Activated T-helper 1 cell treated with anti-CD3 and anti-CD28 coated beads, Interleukin-12 subunit alpha, Interleukin-12 subunit beta, Interleukin-2, Interleukin-4 antibody, amounts not matched to agents 30 ng/mL and 10 ng/mL and 1 ng/mL, durations not matched to agents 14 hours and 24 hours and 36 hours (primary cell): ENCODE measurements at regions of chr6 and their contacts with region 1.

Region 1: GRCh38 chr6:35297601-35298481 is at the start of gene DEF6:
- DNase-seq: peak; percentile 85
- H3K4me3 Mint-ChIP-seq: peak within 1 kb of the TSS; percentile 88
- H3K27ac Mint-ChIP-seq: peak within 1 kb of the TSS; percentile 98
- H3K4me1 Mint-ChIP-seq: peaks cover 48% of the 10 kb centered on the region
- H3K27me3 Mint-ChIP-seq: no peaks in the 10 kb centered on the region
- total RNA-seq, gene DEF6: 123 and 125 TPM in 2 replicates

Region 2: GRCh38 chr6:35259194-35259947 is 38.5 kb before region 1 on chr6 and contains the start of gene ZNF76:
- intact Hi-C with region 1: loop called (anchors 2 kb)
- DNase-seq: peak; percentile 87
- H3K4me3 Mint-ChIP-seq: peak within 1 kb of the TSS; percentile 96
- H3K27ac Mint-ChIP-seq: peak within 1 kb of the TSS; percentile 88
- H3K4me1 Mint-ChIP-seq: peaks cover 40% of the 10 kb centered on the region
- H3K27me3 Mint-ChIP-seq: no peaks in the 10 kb centered on the region
- total RNA-seq, gene ZNF76: 32.8 and 33.1 TPM in 2 replicates

Region 3: DNA sequence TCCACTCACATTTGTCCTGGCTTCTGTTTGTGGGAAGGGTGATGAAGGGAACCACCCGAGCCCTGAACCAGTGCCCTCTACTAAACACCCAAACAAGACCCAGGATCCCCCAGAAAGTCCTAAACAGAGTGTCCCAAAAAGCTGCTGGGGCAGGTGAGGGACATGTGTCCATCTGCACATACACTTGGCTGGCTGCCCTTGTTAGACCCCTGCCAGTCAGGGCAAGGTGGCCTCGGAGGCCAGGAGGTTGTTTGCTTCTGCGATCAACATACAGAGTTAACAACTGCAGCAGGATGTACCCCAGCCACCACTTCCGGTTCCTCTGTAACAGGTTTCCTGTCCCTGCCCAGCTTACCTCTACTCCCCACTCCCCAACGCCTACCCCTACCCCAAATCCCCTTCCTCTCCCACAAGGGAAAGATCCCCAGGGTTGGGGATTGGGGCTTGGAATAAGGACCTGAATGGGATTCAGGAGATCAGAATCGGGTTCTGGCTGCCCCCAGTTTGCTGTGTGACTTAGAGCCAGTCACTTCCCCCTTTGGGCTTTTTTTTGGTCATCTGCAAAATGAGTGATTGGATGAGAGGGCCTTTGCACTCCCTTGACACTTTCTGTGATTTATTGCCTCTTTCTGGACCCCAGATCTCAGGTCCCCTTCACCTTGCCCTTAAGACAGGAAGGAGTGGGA is 13.7 kb after region 1 on chr6:
- intact Hi-C with region 1: loop called (anchors 1 kb)
- DNase-seq: peak; percentile 49
- H3K4me3 Mint-ChIP-seq: peak overlapping the region; percentile 69
- H3K27ac Mint-ChIP-seq: peak overlapping the region; percentile 93
- H3K4me1 Mint-ChIP-seq: peaks cover 89% of the 10 kb centered on the region
- H3K27me3 Mint-ChIP-seq: no peaks in the 10 kb centered on the region

Region 4: DNA sequence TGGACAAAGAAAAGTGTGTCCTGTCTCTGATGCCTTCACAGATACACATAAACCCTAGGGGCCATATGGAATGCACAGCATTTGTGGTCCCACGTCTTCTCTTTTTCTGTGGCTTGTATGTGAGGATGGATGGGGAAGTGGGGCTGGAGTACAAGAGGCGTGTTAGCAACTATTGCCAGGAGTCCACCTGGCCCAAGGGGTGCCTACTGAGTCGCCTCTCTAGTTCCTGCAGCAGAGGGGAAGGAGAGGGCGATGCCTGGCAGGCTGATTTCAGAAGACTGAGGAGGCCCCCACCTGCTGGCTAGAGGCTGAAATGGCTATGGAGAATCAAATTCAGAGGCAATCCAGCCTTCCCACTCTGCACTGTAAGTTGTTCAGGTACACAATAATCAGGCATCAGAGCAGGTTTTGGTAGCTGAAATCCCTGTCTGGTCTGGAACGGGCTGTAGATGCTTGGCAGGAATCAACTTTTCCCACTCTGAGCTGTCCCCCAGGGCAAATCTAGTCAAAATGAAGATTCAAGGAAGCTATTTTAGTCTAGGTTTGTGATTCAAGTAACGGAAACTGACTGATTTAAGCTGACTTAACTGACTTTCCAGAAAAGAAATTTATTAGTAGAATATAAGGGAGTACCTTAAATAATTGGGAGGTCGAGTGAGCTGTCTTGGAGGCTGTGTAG is 29.6 kb after region 1 on chr6:
- intact Hi-C with region 1: loop called (anchors 1 kb)
- DNase-seq: peak; percentile 59
- H3K4me3 Mint-ChIP-seq: no peak overlapping the region
- H3K27ac Mint-ChIP-seq: peak overlapping the region; percentile 27
- H3K4me1 Mint-ChIP-seq: peaks cover 16% of the 10 kb centered on the region
- H3K27me3 Mint-ChIP-seq: no peaks in the 10 kb centered on the region

Region 5: GRCh38 chr6:35368038-35368887 is 70.4 kb after region 1 on chr6:
- intact Hi-C with region 1: loop called (anchors 1 kb)
- DNase-seq: peak; percentile 20
- H3K4me3 Mint-ChIP-seq: no peak overlapping the region
- H3K27ac Mint-ChIP-seq: peak overlapping the region; percentile 50
- H3K4me1 Mint-ChIP-seq: peaks cover 56% of the 10 kb centered on the region
- H3K27me3 Mint-ChIP-seq: no peaks in the 10 kb centered on the region

Region 6: DNA sequence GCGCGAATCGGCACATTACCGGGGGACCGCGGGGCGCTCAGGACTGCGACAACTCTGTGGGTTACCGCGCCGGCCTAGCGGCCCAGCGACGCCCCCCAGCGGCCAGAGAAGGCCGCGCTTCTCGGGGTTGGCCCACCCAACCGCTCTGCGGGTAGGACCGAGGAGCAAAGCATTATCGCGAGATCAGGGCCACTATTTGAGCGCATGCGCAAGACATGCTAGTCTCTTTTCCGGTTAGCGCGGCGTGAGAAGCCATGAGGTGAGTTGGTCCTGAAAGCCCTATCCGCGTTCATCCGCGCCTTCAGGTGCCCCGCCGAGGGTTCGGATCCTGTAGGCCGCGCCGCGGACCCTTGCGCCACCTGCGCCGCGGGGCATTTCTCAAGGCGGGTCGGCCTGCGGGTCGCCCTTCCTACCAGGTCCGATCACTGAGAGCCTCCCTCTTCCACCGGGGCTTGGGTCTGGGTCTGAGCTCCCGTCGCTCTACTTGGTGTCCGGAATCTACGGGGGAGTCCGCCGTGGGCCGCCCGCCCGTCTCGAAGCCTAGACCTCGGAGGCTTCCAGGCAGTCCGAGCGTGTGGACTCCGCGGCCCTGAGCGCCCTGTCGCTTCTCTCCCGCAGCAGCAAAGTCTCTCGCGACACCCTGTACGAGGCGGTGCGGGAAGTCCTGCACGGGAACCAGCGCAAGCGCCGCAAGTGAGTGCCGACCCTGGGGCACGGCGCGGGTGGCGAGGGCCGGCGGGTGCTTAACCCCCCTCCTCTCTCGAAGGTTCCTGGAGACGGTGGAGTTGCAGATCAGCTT is 170.5 kb after region 1 on chr6 and contains the start of gene RPL10A:
- intact Hi-C with region 1: loop called (anchors 1 kb)
- DNase-seq: peak; percentile 93
- H3K4me3 Mint-ChIP-seq: peak within 1 kb of the TSS; percentile 97
- H3K27ac Mint-ChIP-seq: peak within 1 kb of the TSS; percentile 98
- H3K4me1 Mint-ChIP-seq: peaks cover 36% of the 10 kb centered on the region
- H3K27me3 Mint-ChIP-seq: no peaks in the 10 kb centered on the region
- total RNA-seq, gene RPL10A: 1,580 and 1,584 TPM in 2 replicates

Region 7: GRCh38 chr6:35583893-35584688 is 286.2 kb after region 1 on chr6:
- intact Hi-C with region 1: loop called (anchors 1 kb)
- DNase-seq: peak; percentile 54
- H3K4me3 Mint-ChIP-seq: no peak overlapping the region
- H3K27ac Mint-ChIP-seq: no peak overlapping the region
- H3K4me1 Mint-ChIP-seq: peaks cover 44% of the 10 kb centered on the region
- H3K27me3 Mint-ChIP-seq: no peaks in the 10 kb centered on the region